Dorsolateral prefrontal cortex (tissue), 120 donors: ENCODE measurements at regions of chr12 and their contacts with region 1.

Region 1: GRCh38 chr12:569803-570434 is 93.3 kb downstream of the NINJ2 start:
- DNase-seq: peak; percentile 76 to 89 (median 84)
- H3K4me3 ChIP-seq: peak overlapping the region; percentile 48 to 92 (median 68)
- H3K27ac ChIP-seq: peak overlapping the region in 55 of 59 donors; percentile 22 to 87 (median 72)
- H3K27me3 ChIP-seq: no peaks in the 10 kb centered on the region
- CTCF ChIP-seq: peak; percentile 75 to 98 (median 95)

Region 2: GRCh38 chr12:308492-308891 is 261.4 kb before region 1 on chr12:
- intact Hi-C with region 1: no loop called
- DNase-seq: no peak
- H3K4me3 ChIP-seq: no peak overlapping the region
- H3K27ac ChIP-seq: no peak overlapping the region
- H3K27me3 ChIP-seq: no peaks in the 10 kb centered on the region
- CTCF ChIP-seq: no peak

Region 3: GRCh38 chr12:810671-811415 is 240.9 kb after region 1 on chr12:
- intact Hi-C with region 1: loop called in 1 of 2 experiments (anchors 5 kb)
- DNase-seq: peak in 1 of 10 donors; percentile 21
- H3K4me3 ChIP-seq: peak overlapping the region in 7 of 59 donors; percentile 4 to 35 (median 16)
- H3K27ac ChIP-seq: peak overlapping the region in 41 of 59 donors; percentile 0 to 74 (median 40)
- H3K27me3 ChIP-seq: no peaks in the 10 kb centered on the region
- CTCF ChIP-seq: no peak

Region 4: GRCh38 chr12:1093166-1093751 is 523.3 kb after region 1 on chr12:
- intact Hi-C with region 1: loop called (anchors 5 kb)
- DNase-seq: no peak
- H3K4me3 ChIP-seq: no peak overlapping the region
- H3K27ac ChIP-seq: peak overlapping the region in 3 of 59 donors; percentile 9 to 56 (median 13)
- H3K27me3 ChIP-seq: no peaks in the 10 kb centered on the region
- CTCF ChIP-seq: peak; percentile 29 to 85 (median 68)

Region 5: GRCh38 chr12:1583421-1584078 is 1013.6 kb after region 1 on chr12:
- intact Hi-C with region 1: loop called (anchors 10 kb)
- DNase-seq: peak in 8 of 10 donors; percentile 50 to 78 (median 67)
- H3K4me3 ChIP-seq: peak overlapping the region in 45 of 59 donors; percentile 10 to 54 (median 28)
- H3K27ac ChIP-seq: peak overlapping the region in 1 of 59 donors; percentile 30
- H3K27me3 ChIP-seq: no peaks in the 10 kb centered on the region
- CTCF ChIP-seq: peak; percentile 79 to 97 (median 90)